CD4-positive, alpha-beta T cell (primary cell): ENCODE measurements at regions of chr14 and their contacts with region 1.

Region 1: DNA sequence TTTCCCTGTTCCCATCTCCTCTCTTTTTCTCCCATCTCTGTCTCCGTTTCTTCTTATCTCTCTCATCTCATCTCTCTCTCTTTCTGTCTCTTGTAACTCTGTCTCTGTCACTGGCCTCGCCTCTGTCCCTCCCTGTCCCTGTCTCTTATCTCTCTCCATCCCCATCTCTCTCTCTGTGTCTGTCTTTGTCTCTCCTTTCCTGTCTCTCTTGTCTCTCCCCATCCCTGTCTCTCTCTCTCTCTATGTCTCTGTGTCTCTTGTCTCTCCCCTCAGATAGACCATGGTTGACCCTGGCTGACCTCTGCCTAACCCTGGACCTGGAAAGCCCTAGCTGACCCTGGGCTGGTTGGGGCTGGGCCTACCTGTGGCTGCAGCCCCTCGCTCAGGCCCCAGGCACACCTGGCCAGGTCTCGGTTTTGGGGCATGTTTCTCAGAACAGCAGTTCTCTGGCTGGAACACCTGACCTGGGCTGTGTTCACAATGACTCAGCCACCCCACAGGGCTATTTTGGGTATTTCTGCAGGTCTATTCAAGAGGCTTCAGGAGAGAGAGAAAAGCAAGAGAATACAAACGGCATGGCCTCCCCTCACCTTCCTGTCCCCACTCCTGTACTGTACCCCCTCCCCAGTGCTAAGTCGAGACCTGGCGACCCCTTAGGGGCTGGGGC is 174.4 kb downstream of the TMEM121 start:
- DNase-seq: no peak
- ATAC-seq: no peak
- H3K4me3 ChIP-seq: no peak overlapping the region
- H3K4me3 Mint-ChIP-seq: no peak overlapping the region
- H3K27ac ChIP-seq: no peak overlapping the region
- H3K27ac Mint-ChIP-seq: no peak overlapping the region
- H3K4me1 ChIP-seq: no peaks in the 10 kb centered on the region
- H3K4me1 Mint-ChIP-seq: no peaks in the 10 kb centered on the region
- H3K27me3 ChIP-seq: no peaks in the 10 kb centered on the region
- H3K27me3 Mint-ChIP-seq: no peaks in the 10 kb centered on the region
- CTCF ChIP-seq: no peak

Region 2: GRCh38 chr14:105581551-105582341 is 119.0 kb before region 1 on chr14:
- CTCF ChIA-PET with region 1: no interaction called
- POLR2A ChIA-PET with region 1: no interaction called
- intact Hi-C with region 1: loop called in 1 of 2 experiments (anchors 2 kb)
- DNase-seq: no peak
- ATAC-seq: no peak
- H3K4me3 ChIP-seq: no peak overlapping the region
- H3K4me3 Mint-ChIP-seq: no peak overlapping the region
- H3K27ac ChIP-seq: no peak overlapping the region
- H3K27ac Mint-ChIP-seq: no peak overlapping the region
- H3K4me1 ChIP-seq: no peaks in the 10 kb centered on the region
- H3K4me1 Mint-ChIP-seq: no peaks in the 10 kb centered on the region
- H3K27me3 ChIP-seq: no peaks in the 10 kb centered on the region
- H3K27me3 Mint-ChIP-seq: no peaks in the 10 kb centered on the region
- CTCF ChIP-seq: no peak

Region 3: GRCh38 chr14:105773995-105774394 is 73.2 kb after region 1 on chr14:
- CTCF ChIA-PET with region 1: no interaction called
- POLR2A ChIA-PET with region 1: no interaction called
- intact Hi-C with region 1: no loop called
- DNase-seq: no peak
- ATAC-seq: no peak
- H3K4me3 ChIP-seq: no peak overlapping the region
- H3K4me3 Mint-ChIP-seq: no peak overlapping the region
- H3K27ac ChIP-seq: no peak overlapping the region
- H3K27ac Mint-ChIP-seq: no peak overlapping the region
- H3K4me1 ChIP-seq: no peaks in the 10 kb centered on the region
- H3K4me1 Mint-ChIP-seq: no peaks in the 10 kb centered on the region
- H3K27me3 ChIP-seq: no peaks in the 10 kb centered on the region
- H3K27me3 Mint-ChIP-seq: peaks cover 13% of the 10 kb centered on the region
- CTCF ChIP-seq: no peak